ENCODE measurements at regions of chr15 and their contacts with region 1.

Region 1: DNA sequence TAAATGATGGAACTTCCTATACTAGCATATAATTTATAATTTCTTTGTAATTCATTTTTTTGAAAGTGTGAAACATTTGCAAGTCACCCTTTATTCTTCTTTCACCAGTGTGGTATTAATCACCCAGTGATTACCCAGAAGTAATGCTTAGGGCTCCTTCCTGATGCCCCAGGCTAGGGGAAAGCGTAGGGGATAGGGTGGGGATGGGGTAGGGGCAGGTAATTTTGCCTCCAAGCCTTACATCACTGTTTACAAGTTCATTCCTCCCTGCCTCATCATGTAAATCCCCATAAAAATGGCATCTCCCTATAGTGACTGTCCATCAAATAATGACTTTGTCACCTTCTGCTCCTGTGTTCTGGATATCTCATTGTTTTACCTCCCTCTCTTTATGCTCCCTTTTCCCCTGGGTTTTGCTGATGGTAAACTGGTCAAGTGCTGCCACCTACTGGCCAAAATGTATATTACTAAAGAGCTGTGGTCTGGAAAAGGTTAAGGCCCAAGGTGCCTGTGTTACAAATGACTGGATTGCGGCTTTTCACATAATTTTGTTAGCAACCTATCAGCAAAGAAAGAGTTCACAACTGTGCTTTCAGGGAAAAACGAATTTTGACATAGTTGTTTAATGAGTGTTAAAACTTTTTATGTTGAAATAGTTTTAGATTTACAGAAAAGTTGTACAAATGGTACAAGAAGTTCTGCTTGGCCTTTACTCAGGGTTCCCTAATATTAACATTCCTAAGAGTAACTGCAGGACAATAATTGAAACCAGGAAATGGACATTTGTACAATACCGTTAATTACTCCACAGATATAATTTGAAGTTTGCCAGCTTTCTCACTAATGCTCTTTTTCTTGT is 54.7 kb downstream of the ONECUT1 start:
- DNase-seq: no peak
- ATAC-seq: peak; percentile 92

Region 2: GRCh38 chr15:52254321-52254724 is 481.1 kb before region 1 on chr15:
- intact Hi-C with region 1: loop called (anchors 2 kb)
- DNase-seq: no peak
- ATAC-seq: no peak

Region 3: GRCh38 chr15:52528991-52529926 is 206.2 kb before region 1 on chr15:
- intact Hi-C with region 1: loop called (anchors 10 kb)
- DNase-seq: peak; percentile 88
- ATAC-seq: peak; percentile 88

Region 4: GRCh38 chr15:52679232-52680040 is 56.0 kb before region 1 on chr15 and contains the start of gene ATOSA:
- intact Hi-C with region 1: loop called (anchors 10 kb)
- DNase-seq: peak; percentile 94
- ATAC-seq: peak; percentile 96
- total RNA-seq, gene ATOSA: 20.4 TPM